ENCODE measurements at regions of chr7 and their contacts with region 1.

Region 1: DNA sequence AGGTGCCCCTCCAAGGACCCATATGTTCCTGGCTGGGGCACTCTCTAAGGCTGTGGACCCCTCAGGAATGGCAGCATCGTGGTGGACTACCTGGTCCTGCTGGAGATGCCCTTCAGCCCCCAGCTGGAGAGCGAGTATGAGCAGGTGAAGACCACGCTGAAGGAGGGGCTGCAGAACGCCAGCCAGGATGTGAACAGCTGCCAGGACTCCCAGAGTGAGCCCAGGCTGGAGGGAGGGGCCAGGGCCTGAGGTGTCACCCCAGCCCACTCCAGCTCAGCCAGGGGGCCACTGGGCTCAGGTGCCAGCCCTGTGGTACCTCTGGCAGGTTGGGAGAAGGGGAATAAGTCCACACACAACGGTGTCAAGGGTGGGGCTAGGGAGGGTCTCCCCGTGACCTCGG is 4.7 kb upstream of the MUC12 start:
- DNase-seq: no peak
- H3K4me3 ChIP-seq: no peak overlapping the region
- H3K27ac ChIP-seq: no peak overlapping the region
- H3K4me1 ChIP-seq: peaks cover 10% of the 10 kb centered on the region in 2 donors
- H3K27me3 ChIP-seq: peaks cover 0 to 76% of the 10 kb centered on the region in 2 donors
- CTCF ChIP-seq: no peak
- POLR2A ChIP-seq: no peak

Region 2: DNA sequence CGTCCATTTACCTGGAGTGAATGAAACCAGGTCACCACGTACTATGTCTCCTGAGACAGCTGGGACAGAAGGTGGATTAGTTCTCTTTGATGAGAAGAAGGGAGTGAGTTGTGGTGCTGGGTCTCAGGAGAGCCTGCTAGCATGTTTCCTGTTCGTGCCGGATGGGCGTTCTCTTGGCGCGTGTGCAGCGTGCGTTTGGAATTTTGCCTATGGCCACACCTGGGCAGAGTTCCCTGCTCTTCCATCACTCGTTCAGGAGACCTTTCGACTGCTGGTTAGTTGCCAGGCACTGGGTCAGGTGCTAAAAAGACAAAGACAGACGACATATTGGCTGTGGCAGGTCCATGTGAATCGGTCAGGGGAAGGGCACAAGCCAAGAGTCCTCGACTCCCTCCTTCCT is 1996.0 kb before region 1 on chr7:
- intact Hi-C with region 1: no loop called
- DNase-seq: no peak
- H3K4me3 ChIP-seq: no peak overlapping the region
- H3K27ac ChIP-seq: no peak overlapping the region
- H3K4me1 ChIP-seq: no peaks in the 10 kb centered on the region
- H3K27me3 ChIP-seq: no peaks in the 10 kb centered on the region
- CTCF ChIP-seq: no peak
- POLR2A ChIP-seq: no peak

Region 3: DNA sequence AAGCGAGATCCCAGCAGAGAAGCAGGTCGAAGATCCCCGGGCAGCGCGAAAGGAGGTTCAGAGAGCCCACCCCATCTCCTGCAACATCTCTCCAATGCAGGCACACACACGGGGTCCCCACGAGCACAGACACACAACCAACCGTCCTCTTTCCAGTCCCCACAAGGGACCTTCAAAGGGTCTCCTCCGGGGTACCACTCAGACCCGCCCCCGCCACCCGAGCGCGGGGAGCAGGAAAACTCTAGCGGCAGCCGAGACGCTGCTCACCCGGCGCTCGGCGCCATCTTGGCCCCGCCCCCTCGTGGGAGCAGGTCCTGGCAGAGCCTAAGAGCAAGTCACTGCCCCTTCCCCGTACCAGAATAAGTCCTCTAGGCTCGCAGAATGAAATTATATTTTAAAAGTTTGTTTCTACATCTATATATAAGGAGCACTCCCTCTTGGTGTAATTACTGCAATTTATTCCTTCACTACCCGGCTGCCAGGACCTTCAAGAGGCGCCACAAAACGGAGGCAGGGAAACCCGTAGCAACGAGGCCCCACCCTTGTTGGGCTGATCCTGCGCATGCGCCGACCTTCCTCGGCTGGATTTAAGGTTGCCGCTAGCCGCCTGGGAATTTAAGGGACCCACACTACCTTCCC is 845.4 kb before region 1 on chr7 and contains the starts of genes CNPY4 and TAF6:
- intact Hi-C with region 1: loop called (anchors 5 kb)
- DNase-seq: peak; percentile 93 to 95
- H3K4me3 ChIP-seq: peak within 1 kb of the TSS; percentile 63 to 81 (median 76)
- H3K27ac ChIP-seq: peak within 1 kb of the TSS; percentile 80 to 88
- H3K4me1 ChIP-seq: peaks cover 3 to 7% of the 10 kb centered on the region in 2 donors
- H3K27me3 ChIP-seq: no peaks in the 10 kb centered on the region
- CTCF ChIP-seq: no peak
- POLR2A ChIP-seq: peak; percentile 62
- total RNA-seq, gene CNPY4: 7.2 to 11.8 (median 11.3) TPM
- total RNA-seq, gene TAF6: 31.5 to 35.0 (median 34.4) TPM

Region 4: DNA sequence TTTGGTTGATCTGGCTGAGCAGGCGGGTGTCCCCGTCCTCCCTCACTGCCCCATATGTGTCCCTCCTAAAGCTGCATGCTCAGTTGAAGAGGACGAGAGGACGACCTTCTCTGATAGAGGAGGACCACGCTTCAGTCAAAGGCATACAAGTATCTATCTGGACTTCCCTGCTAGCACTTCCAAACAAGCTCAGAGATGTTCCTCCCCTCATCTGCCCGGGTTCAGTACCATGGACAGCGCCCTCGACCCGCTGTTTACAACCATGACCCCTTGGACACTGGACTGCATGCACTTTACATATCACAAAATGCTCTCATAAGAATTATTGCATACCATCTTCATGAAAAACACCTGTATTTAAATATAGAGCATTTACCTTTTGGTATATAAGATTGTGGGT is 93.7 kb after region 1 on chr7:
- intact Hi-C with region 1: no loop called
- DNase-seq: peak in 1 of 2 donors; percentile 68
- H3K4me3 ChIP-seq: no peak overlapping the region
- H3K27ac ChIP-seq: no peak overlapping the region
- H3K4me1 ChIP-seq: no peaks in the 10 kb centered on the region
- H3K27me3 ChIP-seq: peaks cover 0 to 22% of the 10 kb centered on the region in 2 donors
- CTCF ChIP-seq: no peak
- POLR2A ChIP-seq: no peak

Measured in breast epithelium (tissue), 4 donors.